Posterior vena cava (tissue), 2 donors: ENCODE measurements at regions of chr18 and their contacts with region 1.

Region 1: GRCh38 chr18:6714010-6714409 is 15.5 kb upstream of the ARHGAP28 start:
- DNase-seq: no peak

Region 2: GRCh38 chr18:6629635-6630140 is 84.3 kb before region 1 on chr18:
- intact Hi-C with region 1: loop called in 1 of 2 experiments (anchors 10 kb)
- DNase-seq: no peak

Region 3: GRCh38 chr18:6648581-6648980 is 65.4 kb before region 1 on chr18:
- intact Hi-C with region 1: loop called in 1 of 2 experiments (anchors 10 kb)
- DNase-seq: no peak